CD4-positive, alpha-beta memory T cell (primary cell): ENCODE measurements at regions of chr1 and their contacts with region 1.

Region 1: DNA sequence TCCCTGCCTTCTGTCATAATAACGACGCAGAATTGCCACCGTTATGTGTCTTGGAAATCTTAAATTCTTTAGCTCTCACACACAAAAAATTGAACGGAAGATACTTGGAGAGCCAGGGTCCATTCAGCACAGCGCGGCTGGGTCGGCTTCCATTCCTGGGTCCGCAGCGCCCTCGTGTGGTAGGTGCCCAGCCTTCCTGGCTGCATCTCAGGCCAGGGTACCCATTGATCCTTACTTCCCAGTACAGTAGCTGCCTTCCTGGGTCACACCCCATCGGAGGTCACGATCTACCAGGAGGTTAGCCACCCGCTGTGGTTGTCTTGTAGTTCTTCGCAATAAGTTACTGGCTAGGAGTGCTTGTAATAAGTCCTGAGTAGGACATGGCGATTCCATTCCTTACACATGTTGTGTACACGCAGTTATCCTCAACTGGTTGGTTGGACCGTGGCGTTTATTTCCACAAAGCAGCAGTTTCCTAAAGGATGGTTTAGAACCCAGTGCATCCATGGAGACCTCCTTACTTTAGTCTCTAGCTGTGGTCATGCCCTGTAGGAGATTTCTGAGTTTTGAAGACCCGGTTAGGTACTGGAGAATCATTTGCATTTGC is 9.9 kb upstream of the MTARC1 start:
- DNase-seq: peak; percentile 37 to 50 (median 42)
- H3K4me3 ChIP-seq: no peak overlapping the region
- H3K4me3 Mint-ChIP-seq: no peak overlapping the region
- H3K27ac ChIP-seq: no peak overlapping the region
- H3K27ac Mint-ChIP-seq: peak overlapping the region in 1 of 7 donors; percentile 36
- H3K4me1 ChIP-seq: no peaks in the 10 kb centered on the region
- H3K4me1 Mint-ChIP-seq: peaks cover 0 to 1% (median 0%) of the 10 kb centered on the region in 4 donors
- H3K27me3 ChIP-seq: no peaks in the 10 kb centered on the region
- H3K27me3 Mint-ChIP-seq: peaks cover 1 to 15% of the 10 kb centered on the region in 2 donors

Region 2: GRCh38 chr1:220189750-220190347 is 587.0 kb before region 1 on chr1:
- CTCF ChIA-PET with region 1: no interaction called
- POLR2A ChIA-PET with region 1: no interaction called
- intact Hi-C with region 1: loop called (anchors 5 kb)
- DNase-seq: peak in 2 of 5 donors; percentile 4 to 8
- H3K4me3 ChIP-seq: no peak overlapping the region
- H3K4me3 Mint-ChIP-seq: no peak overlapping the region
- H3K27ac ChIP-seq: no peak overlapping the region
- H3K27ac Mint-ChIP-seq: peak overlapping the region in 1 of 7 donors; percentile 22
- H3K4me1 ChIP-seq: no peaks in the 10 kb centered on the region
- H3K4me1 Mint-ChIP-seq: peaks cover 0 to 3% (median under 1%) of the 10 kb centered on the region in 4 donors
- H3K27me3 ChIP-seq: no peaks in the 10 kb centered on the region
- H3K27me3 Mint-ChIP-seq: no peaks in the 10 kb centered on the region

Region 3: DNA sequence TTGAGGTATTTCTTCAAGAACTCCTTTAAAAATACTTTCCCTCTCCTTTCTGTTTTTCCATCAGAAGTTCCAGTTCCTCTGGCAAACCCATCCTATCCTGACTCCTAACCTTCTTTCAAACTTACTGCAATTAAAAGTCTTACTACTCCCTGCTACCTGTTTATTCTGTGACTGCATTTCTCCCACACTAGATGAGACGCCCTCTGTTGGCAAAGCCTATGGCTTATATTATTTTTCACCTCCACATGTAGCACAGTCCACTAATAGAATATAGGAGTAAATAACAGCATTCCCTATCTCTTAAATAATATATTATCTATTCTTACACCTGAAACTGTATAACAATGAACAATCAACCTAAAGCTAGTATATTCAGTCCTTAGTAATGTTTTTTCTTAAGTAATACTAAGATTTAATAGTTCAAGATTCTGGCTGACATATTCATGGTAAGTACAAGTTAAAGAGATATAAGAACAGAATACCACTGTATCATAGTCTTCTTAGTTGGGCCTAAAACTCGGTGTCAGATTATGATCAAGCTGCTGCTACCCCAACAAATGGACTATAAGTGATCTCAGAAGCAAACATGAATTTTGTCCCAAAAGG is 559.3 kb before region 1 on chr1:
- CTCF ChIA-PET with region 1: no interaction called
- POLR2A ChIA-PET with region 1: no interaction called
- intact Hi-C with region 1: loop called (anchors 5 kb)
- DNase-seq: peak in 1 of 5 donors; percentile 3
- H3K4me3 ChIP-seq: no peak overlapping the region
- H3K4me3 Mint-ChIP-seq: no peak overlapping the region
- H3K27ac ChIP-seq: no peak overlapping the region
- H3K27ac Mint-ChIP-seq: peak overlapping the region in 2 of 7 donors; percentile 6 to 10
- H3K4me1 ChIP-seq: peaks cover 32% of the 10 kb centered on the region
- H3K4me1 Mint-ChIP-seq: peaks cover 25 to 37% (median 30%) of the 10 kb centered on the region in 4 donors
- H3K27me3 ChIP-seq: no peaks in the 10 kb centered on the region
- H3K27me3 Mint-ChIP-seq: no peaks in the 10 kb centered on the region

Region 4: GRCh38 chr1:220294846-220295301 is 481.9 kb before region 1 on chr1:
- CTCF ChIA-PET with region 1: interaction called, 5 read pairs
- POLR2A ChIA-PET with region 1: no interaction called
- intact Hi-C with region 1: loop called (anchors 5 kb)
- DNase-seq: no peak
- H3K4me3 ChIP-seq: no peak overlapping the region
- H3K4me3 Mint-ChIP-seq: no peak overlapping the region
- H3K27ac ChIP-seq: no peak overlapping the region
- H3K27ac Mint-ChIP-seq: no peak overlapping the region
- H3K4me1 ChIP-seq: no peaks in the 10 kb centered on the region
- H3K4me1 Mint-ChIP-seq: peaks cover 0 to 2% (median 0%) of the 10 kb centered on the region in 4 donors
- H3K27me3 ChIP-seq: no peaks in the 10 kb centered on the region
- H3K27me3 Mint-ChIP-seq: peaks cover 12 to 18% of the 10 kb centered on the region in 2 donors

Region 5: GRCh38 chr1:220680085-220680687 is 96.6 kb before region 1 on chr1:
- CTCF ChIA-PET with region 1: interaction called, 5 read pairs
- POLR2A ChIA-PET with region 1: no interaction called
- intact Hi-C with region 1: loop called (anchors 1 kb)
- DNase-seq: peak in 4 of 5 donors; percentile 11 to 39 (median 23)
- H3K4me3 ChIP-seq: no peak overlapping the region
- H3K4me3 Mint-ChIP-seq: no peak overlapping the region
- H3K27ac ChIP-seq: no peak overlapping the region
- H3K27ac Mint-ChIP-seq: peak overlapping the region in 1 of 7 donors; percentile 7
- H3K4me1 ChIP-seq: no peaks in the 10 kb centered on the region
- H3K4me1 Mint-ChIP-seq: peaks cover 0 to 4% (median 2%) of the 10 kb centered on the region in 4 donors
- H3K27me3 ChIP-seq: no peaks in the 10 kb centered on the region
- H3K27me3 Mint-ChIP-seq: peaks cover 0 to 2% of the 10 kb centered on the region in 2 donors